Right cardiac atrium (tissue), 5 donors: ENCODE measurements at regions of chr1 and their contacts with region 1.

Region 1: DNA sequence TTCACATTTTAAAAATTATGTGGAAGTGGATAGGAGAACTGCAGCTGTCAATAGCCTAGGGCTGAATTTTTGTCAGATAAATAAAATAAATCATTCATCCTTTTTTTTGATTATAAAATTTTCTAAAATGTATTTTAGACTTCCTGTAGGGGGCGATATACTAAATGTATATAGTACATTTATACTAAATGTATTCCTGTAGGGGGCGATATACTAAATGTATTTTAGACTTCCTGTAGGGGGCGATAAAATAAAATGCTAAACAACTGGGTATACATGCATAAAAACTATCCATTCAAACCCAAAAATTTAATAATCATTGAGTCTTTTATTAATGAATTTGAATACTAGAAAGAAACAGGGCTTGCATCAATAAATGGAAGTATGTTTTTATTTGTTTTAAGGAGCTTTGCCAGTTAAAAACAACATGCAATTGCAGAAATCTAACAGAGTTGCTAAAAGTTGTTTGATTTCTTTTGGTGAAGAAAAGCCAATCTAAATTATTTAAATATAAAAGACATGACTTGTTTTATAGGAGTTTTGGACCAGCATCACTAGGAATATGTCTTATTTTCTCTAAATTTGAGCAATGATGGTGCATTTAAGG is 31.4 kb downstream of the CLCA1 start:
- DNase-seq: no peak
- ATAC-seq: no peak
- H3K4me3 ChIP-seq: no peak overlapping the region
- H3K27ac ChIP-seq: no peak overlapping the region
- H3K4me1 ChIP-seq: no peaks in the 10 kb centered on the region
- H3K27me3 ChIP-seq: no peaks in the 10 kb centered on the region

Region 2: DNA sequence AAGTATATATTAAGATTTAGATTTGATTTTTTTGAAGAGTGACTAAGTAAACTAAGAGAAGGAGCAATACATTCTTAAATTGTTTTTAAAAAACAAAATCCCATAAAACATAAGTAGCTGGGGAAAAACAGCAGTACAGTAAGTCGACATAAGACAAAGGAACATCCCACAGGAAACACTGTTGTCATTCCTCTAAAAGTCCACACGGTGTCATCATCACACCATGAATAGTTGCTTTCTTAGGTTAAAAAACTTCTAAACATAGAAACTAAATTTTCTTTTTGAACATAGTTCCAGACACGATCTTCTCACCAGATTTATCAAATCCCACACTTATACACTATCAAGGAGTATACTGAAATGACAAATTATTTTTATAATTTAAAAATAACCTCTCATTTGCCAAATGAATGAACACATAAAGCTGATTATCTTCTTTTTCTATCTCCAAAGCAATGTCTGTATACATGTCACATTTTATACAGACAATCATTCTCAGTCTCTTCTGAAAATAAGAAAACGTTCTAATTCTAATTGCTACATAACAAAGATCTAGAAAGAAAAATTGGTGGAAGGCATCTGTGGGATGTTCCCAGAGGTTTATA is 119.7 kb before region 1 on chr1:
- intact Hi-C with region 1: loop called (anchors 5 to 10 kb)
- DNase-seq: no peak
- ATAC-seq: peak; percentile 46 to 62
- H3K4me3 ChIP-seq: no peak overlapping the region
- H3K27ac ChIP-seq: no peak overlapping the region
- H3K4me1 ChIP-seq: no peaks in the 10 kb centered on the region
- H3K27me3 ChIP-seq: no peaks in the 10 kb centered on the region

Region 3: DNA sequence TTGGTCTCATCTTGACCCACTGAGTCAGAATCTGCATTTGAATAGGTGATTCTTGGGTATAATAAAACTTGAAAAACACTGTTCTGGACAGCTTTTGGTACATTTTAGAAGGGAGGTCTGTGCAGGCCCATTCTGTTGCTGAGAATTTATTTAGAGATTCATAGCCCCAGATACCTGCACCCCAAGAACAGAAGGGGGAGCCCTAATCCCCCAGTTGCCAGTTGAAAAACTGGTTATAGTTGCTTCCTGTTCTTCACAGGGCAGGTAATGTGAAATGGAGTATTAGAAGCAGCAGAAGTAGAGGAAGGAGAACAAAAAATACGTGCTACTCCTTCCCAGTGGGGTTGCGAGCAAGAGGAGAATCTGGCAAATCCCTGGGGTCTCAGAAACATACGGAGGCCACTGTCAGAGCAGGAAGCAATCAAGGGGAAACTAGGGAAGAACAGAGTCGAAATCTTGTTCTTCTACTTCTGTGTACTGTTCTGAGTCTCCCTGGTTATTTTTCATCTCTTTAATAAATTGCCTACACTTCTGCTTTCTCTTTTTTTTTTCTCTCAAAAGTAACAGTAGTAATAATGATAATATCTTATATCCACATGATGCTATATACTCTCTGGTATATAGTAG is 80.7 kb before region 1 on chr1:
- intact Hi-C with region 1: loop called in 1 of 4 experiments (anchors 10 kb)
- DNase-seq: no peak
- ATAC-seq: no peak
- H3K4me3 ChIP-seq: no peak overlapping the region
- H3K27ac ChIP-seq: no peak overlapping the region
- H3K4me1 ChIP-seq: no peaks in the 10 kb centered on the region
- H3K27me3 ChIP-seq: no peaks in the 10 kb centered on the region

Region 4: GRCh38 chr1:86542626-86543025 is 42.5 kb after region 1 on chr1:
- intact Hi-C with region 1: no loop called
- DNase-seq: no peak
- ATAC-seq: no peak
- H3K4me3 ChIP-seq: no peak overlapping the region
- H3K27ac ChIP-seq: no peak overlapping the region
- H3K4me1 ChIP-seq: no peaks in the 10 kb centered on the region
- H3K27me3 ChIP-seq: no peaks in the 10 kb centered on the region

Region 5: GRCh38 chr1:86714159-86714558 is 214.1 kb after region 1 on chr1:
- intact Hi-C with region 1: no loop called
- DNase-seq: no peak
- ATAC-seq: peak; percentile 52 to 64
- H3K4me3 ChIP-seq: no peak overlapping the region
- H3K27ac ChIP-seq: peak overlapping the region; percentile 52
- H3K4me1 ChIP-seq: peaks cover 6% of the 10 kb centered on the region
- H3K27me3 ChIP-seq: no peaks in the 10 kb centered on the region